ENCODE measurements at regions of chr3 and their contacts with region 1.

Region 1: GRCh38 chr3:188272481-188273372 is 118.8 kb downstream of the LPP start:
- DNase-seq: peak; percentile 87
- ATAC-seq: peak; percentile 89
- H3K4me3 ChIP-seq: 0 out of 2 replicates have a peak overlapping the region, but pooled peaks have one; percentile 14
- H3K27ac ChIP-seq: peak overlapping the region; percentile 91
- H3K4me1 ChIP-seq: peaks cover 59% of the 10 kb centered on the region
- H3K27me3 ChIP-seq: no peaks in the 10 kb centered on the region
- CTCF ChIP-seq: no peak

Region 2: DNA sequence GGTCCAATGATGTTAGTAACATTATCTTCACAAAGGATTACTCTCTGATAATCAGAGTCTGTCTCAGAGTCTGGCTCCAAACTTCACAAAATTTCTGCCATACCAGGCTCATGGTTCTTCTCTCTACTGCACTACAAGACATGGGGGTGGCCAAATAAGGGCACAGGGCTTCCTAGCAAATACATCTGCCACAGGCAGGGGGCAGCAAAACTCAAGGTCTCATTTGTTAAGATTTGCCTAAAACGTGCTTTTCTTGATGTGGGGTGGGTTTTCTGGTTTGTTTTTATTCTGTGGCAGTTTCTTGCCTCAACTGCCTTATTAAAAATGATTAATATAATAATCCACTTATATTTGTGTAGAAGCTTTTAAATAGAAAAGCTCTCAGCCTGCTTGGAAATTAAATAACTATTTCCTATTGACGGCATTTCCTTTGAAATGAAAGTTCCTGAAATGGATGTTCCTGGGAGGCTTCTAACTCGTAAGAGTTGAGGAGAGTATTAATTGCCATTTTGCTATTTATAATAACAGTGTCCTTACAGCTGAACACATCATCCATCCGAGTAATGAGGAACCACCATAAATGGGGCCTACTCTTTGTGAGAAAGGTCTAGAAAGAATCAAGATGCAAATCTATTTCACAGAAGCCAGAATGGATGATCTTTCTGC is 656.3 kb before region 1 on chr3:
- CTCF ChIA-PET with region 1: no interaction called
- POLR2A ChIA-PET with region 1: no interaction called
- intact Hi-C with region 1: no loop called
- DNase-seq: peak; percentile 66
- ATAC-seq: peak; percentile 74
- H3K4me3 ChIP-seq: no peak overlapping the region
- H3K27ac ChIP-seq: no peak overlapping the region
- H3K4me1 ChIP-seq: no peaks in the 10 kb centered on the region
- H3K27me3 ChIP-seq: peaks cover 75% of the 10 kb centered on the region
- CTCF ChIP-seq: peak; percentile 87

Region 3: DNA sequence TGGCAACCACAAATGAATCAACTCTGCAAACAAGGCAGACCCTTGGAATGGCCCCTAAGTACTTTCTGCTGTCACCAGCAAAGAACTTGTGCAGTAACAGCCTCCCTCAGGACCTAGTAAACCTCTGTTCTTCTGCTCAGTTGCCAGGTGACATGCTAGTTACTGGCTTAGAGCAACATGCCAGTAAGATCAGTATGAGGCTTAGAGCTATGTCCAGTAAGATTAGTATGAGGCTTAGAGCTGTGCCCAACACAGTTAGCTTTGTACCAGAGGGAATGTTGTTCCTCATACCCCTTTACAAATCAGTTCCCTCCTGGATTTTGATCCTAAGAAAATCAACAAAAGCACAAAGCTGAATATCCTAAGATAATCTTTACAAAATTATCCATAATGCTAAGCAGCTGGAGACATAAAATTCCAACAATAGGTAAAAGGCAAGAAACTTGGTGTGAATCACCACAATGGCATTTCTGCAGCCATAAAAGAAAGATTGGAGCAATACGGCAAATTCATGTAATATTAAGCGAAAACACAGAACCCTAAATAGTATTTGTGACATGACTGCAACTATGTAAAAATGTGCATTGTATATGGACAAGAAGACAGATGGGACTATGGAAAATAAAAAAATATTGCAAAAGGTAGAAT is 226.0 kb before region 1 on chr3:
- CTCF ChIA-PET with region 1: no interaction called
- POLR2A ChIA-PET with region 1: no interaction called
- intact Hi-C with region 1: loop called (anchors 2 kb)
- DNase-seq: peak; percentile 74
- ATAC-seq: peak; percentile 81
- H3K4me3 ChIP-seq: peak overlapping the region; percentile 1; the same call in 1 of the 2 replicates
- H3K27ac ChIP-seq: peak overlapping the region; percentile 61
- H3K4me1 ChIP-seq: peaks cover 28% of the 10 kb centered on the region
- H3K27me3 ChIP-seq: no peaks in the 10 kb centered on the region
- CTCF ChIP-seq: no peak

Measured in PC-3 (cell line).